Activated CD4-positive, alpha-beta memory T cell treated with anti-CD3 and anti-CD28 coated beads for 36 hours (primary cell): ENCODE measurements at regions of chr11 and their contacts with region 1.

Region 1: DNA sequence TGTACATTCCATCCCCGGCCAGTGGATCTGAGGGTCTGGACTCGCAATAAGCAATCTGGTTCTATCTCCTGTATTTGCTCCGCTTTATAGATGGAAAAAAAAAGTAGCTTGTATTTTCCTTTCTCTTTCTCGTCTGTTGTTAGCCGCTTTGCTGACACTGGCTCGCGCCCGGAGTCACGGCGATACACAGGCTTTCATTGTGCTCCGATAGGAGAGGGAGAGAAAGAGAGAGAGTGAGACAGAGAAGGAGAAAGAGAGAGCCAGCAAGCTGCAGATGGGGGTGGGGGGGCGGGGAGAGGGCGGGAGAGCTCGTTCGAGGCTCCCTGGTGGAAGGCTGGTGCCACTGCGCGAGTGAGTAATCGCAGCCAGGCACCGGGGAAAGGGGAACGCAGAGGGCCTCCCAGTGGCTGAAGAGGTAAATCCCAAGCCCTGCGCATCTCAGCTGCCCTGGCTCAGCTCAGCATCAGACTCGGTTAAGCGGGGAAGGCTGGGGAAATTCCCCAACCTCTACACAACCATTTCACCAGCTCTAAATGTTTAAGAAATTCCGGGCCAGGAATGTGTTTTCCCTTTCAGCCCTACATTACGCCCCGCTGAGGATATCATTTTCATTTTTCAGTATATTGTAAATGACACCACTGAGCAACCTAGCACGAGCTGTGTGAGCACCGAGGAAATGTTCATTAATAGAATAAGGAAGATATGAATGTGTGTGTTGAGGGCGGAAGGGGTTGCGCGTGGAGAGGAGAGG is at the start of gene MAML2:
- DNase-seq: peak; percentile 96
- H3K4me3 Mint-ChIP-seq: peak within 1 kb of the TSS; percentile 86
- H3K27ac Mint-ChIP-seq: peak within 1 kb of the TSS; percentile 95
- H3K4me1 Mint-ChIP-seq: peaks cover 26% of the 10 kb centered on the region
- H3K27me3 Mint-ChIP-seq: no peaks in the 10 kb centered on the region
- total RNA-seq, gene MAML2: 24.2 TPM

Region 2: DNA sequence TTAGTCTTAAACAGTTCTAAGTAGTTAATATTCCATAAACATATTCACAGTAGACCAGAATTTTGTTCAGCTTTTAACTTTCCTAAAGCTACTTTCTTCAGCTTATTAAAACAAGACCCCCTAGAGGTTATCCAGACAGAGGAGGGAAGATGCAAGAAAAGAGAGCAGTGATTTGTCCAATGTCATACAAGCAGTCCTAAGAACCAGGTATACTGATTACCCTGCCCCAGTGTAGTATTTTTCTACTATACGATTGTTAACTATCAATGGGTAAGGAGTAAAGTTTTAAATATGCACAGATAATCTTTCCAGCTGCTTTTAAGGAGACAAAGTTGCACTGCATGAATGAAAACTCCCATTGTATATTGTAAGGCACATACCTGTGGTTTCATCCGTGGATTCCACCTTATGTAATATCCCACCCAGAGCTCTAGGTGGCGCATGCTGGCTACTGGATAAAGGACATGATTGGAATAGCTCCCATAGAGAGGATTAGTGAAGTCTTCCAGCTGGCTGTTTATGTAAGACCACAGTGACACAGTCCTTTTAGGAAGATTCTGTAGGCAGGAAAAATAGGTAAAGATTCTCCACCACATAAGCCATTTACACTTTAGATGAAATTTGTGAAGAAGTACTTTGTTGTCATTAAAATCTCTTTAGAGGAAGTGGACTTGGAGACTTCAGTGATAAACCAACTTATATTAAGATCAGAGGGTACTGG is 507.2 kb before region 1 on chr11:
- CTCF ChIA-PET with region 1: interaction called, 20 read pairs
- POLR2A ChIA-PET with region 1: no interaction called
- intact Hi-C with region 1: loop called (anchors 2 kb)
- DNase-seq: peak; percentile 63
- H3K4me3 Mint-ChIP-seq: no peak overlapping the region
- H3K27ac Mint-ChIP-seq: no peak overlapping the region
- H3K4me1 Mint-ChIP-seq: peaks cover 3% of the 10 kb centered on the region
- H3K27me3 Mint-ChIP-seq: no peaks in the 10 kb centered on the region

Region 3: GRCh38 chr11:96054870-96055705 is 288.0 kb before region 1 on chr11:
- CTCF ChIA-PET with region 1: interaction called, 78 read pairs
- POLR2A ChIA-PET with region 1: interaction called, 7 read pairs
- intact Hi-C with region 1: loop called (anchors 1 kb)
- DNase-seq: no peak
- H3K4me3 Mint-ChIP-seq: no peak overlapping the region
- H3K27ac Mint-ChIP-seq: peak overlapping the region; percentile 75
- H3K4me1 Mint-ChIP-seq: peaks cover 82% of the 10 kb centered on the region
- H3K27me3 Mint-ChIP-seq: no peaks in the 10 kb centered on the region

Region 4: GRCh38 chr11:96188243-96189006 is 154.7 kb before region 1 on chr11:
- CTCF ChIA-PET with region 1: interaction called, 28 read pairs
- POLR2A ChIA-PET with region 1: interaction called, 9 read pairs
- intact Hi-C with region 1: no loop called
- DNase-seq: peak; percentile 59
- H3K4me3 Mint-ChIP-seq: peak overlapping the region; percentile 7
- H3K27ac Mint-ChIP-seq: peak overlapping the region; percentile 79
- H3K4me1 Mint-ChIP-seq: peaks cover 74% of the 10 kb centered on the region
- H3K27me3 Mint-ChIP-seq: no peaks in the 10 kb centered on the region

Region 5: DNA sequence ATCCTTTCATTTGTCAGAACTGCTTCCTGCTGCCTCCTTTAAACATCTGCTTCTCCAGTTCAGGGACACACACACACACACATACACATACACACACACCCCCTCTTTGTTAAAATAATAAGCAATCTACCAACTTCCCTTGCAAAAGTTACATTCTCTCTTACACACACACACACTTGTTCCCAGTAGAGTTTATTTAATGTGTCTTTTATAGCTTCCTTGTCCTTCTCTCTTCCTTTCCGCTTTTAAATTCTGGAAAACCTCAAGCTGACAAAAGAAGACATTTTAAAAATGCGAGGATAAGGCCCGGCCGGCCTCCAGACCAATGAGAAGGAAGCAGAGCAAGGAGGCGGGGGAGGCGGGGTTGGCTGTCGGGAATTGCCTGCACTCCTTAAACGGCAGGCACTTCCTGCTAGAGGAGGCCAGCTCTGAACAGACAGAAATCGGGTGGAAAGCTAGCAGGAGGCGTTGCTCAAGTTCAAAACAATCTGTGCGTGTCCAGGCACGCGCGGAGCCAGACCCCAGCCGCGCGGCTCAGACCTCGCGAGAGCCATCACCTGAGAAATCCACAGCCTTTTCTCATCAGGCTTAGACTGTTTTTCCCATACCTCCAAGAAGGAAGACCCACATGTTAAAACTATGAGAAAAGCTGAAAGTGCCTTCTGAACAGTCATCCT is 100.0 kb before region 1 on chr11:
- CTCF ChIA-PET with region 1: interaction called, 93 read pairs
- POLR2A ChIA-PET with region 1: interaction called, 11 read pairs
- intact Hi-C with region 1: loop called (anchors 1 kb)
- DNase-seq: peak; percentile 91
- H3K4me3 Mint-ChIP-seq: peak overlapping the region; percentile 78
- H3K27ac Mint-ChIP-seq: peak overlapping the region; percentile 95
- H3K4me1 Mint-ChIP-seq: peaks cover 53% of the 10 kb centered on the region
- H3K27me3 Mint-ChIP-seq: no peaks in the 10 kb centered on the region

Region 6: GRCh38 chr11:96293598-96294021 is 49.5 kb before region 1 on chr11:
- CTCF ChIA-PET with region 1: interaction called, 11 read pairs
- POLR2A ChIA-PET with region 1: interaction called, 3 read pairs
- intact Hi-C with region 1: loop called (anchors 2 kb)
- DNase-seq: no peak
- H3K4me3 Mint-ChIP-seq: no peak overlapping the region
- H3K27ac Mint-ChIP-seq: peak overlapping the region; percentile 0
- H3K4me1 Mint-ChIP-seq: peaks cover 71% of the 10 kb centered on the region
- H3K27me3 Mint-ChIP-seq: no peaks in the 10 kb centered on the region

Region 7: GRCh38 chr11:96357794-96358193 is 14.7 kb after region 1 on chr11:
- CTCF ChIA-PET with region 1: interaction called, 17 read pairs
- POLR2A ChIA-PET with region 1: interaction called, 4 read pairs
- intact Hi-C with region 1: no loop called
- DNase-seq: no peak
- H3K4me3 Mint-ChIP-seq: no peak overlapping the region
- H3K27ac Mint-ChIP-seq: no peak overlapping the region
- H3K4me1 Mint-ChIP-seq: peaks cover 21% of the 10 kb centered on the region
- H3K27me3 Mint-ChIP-seq: no peaks in the 10 kb centered on the region